IMR-90 (cell line): ENCODE measurements at regions of chr3 and their contacts with region 1.

Region 1: DNA sequence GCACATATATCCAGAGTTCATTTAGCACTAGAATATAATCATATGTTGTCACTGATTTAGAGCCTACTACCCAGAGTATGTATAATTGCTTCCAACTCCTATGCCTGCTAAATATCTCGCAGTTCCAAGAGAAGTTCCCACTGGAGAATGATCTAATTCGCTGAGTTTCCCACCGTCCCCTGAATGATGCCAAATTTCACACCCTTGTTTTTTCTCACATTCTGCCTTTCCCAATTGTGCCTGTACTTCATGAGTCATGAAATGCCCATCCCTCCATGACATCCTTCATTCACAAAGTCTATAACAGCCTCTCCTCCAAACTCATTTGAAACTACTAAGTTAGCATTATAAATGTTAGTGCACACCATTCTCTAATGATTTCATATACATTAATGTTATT is 177.2 kb downstream of the CBLB start:
- DNase-seq: no peak
- ATAC-seq: no peak
- H3K4me3 ChIP-seq: no peak overlapping the region
- H3K27ac ChIP-seq: no peak overlapping the region
- H3K4me1 ChIP-seq: no peaks in the 10 kb centered on the region
- H3K27me3 ChIP-seq: no peaks in the 10 kb centered on the region
- CTCF ChIP-seq: no peak
- POLR2A ChIP-seq: no peak
- RAD21 ChIP-seq: no peak

Region 2: DNA sequence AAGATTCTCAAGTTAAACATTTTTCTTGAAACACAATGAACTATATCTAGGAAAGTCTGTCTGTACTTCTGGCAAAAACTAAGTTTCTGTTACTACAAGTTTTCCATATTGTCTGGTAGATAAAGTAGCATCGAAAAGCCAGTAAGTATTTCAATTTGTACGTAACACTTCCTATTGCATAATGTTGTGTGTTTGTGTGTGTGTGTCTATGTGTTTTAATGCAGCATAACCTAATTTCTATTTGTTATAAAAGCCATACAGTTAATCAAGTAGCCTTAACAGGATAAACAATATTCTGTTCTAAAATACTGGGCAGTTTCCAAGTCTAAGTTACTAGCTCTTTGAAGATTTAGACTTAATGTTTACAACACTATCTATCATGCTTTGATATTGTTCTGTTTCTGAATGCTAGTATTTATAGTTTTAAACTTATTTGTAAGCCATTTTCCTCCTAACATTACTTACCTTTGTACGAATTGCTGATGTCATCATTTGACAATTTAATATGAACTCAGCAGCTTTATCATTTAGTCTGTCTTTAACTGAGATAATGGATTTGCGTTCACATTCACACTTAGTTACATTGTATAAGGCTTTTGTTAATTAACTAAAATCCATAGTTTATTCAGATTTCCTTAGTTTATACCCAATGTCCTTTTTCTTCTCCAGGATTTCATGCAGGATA is 13.2 kb after region 1 on chr3:
- CTCF ChIA-PET with region 1: no interaction called
- POLR2A ChIA-PET with region 1: no interaction called
- dilution Hi-C with region 1: no loop called
- in situ Hi-C with region 1: no loop called
- intact Hi-C with region 1: no loop called
- DNase-seq: no peak
- ATAC-seq: no peak
- H3K4me3 ChIP-seq: no peak overlapping the region
- H3K27ac ChIP-seq: no peak overlapping the region
- H3K4me1 ChIP-seq: no peaks in the 10 kb centered on the region
- H3K27me3 ChIP-seq: no peaks in the 10 kb centered on the region
- CTCF ChIP-seq: no peak
- POLR2A ChIP-seq: no peak
- RAD21 ChIP-seq: no peak

Region 3: DNA sequence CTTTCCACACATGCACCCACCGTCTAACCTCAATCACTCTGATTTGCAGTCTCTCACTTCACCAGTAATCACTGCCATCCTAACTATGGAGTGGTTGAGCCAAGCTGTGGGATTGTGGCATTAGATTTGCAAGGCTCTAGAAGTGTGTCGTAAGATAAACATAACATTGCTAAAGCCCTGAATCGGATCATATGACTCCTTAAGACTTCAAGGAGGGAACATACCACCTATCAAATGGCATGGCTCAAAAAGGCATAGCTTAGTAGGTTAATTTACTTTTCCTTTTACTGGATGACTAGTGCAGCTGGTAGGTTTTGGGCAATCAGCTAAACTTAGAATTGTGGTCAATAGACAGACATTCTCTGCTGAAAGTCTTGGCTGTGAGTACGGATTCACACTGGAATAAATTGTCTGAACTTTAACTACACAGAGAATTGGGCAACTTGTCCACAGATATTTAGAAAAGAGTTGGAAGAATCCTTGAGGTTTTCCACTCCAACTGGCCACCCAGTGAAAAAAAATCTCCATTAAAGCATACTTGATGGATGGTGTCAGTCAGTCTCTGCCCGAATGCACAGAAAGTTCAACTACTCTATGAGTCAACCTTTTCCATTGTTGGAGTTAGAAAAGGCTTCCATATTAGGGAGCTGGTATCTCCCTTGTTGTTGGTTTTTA is 653.9 kb after region 1 on chr3:
- CTCF ChIA-PET with region 1: no interaction called
- POLR2A ChIA-PET with region 1: no interaction called
- dilution Hi-C with region 1: no loop called
- in situ Hi-C with region 1: no loop called
- intact Hi-C with region 1: loop called (anchors 5 kb)
- DNase-seq: peak; percentile 93
- ATAC-seq: peak; percentile 95
- H3K4me3 ChIP-seq: no peak overlapping the region
- H3K27ac ChIP-seq: peak overlapping the region; percentile 5; the same call in 1 of the 2 replicates
- H3K4me1 ChIP-seq: peaks cover 2% of the 10 kb centered on the region; the same call in 1 of the 2 replicates
- H3K27me3 ChIP-seq: no peaks in the 10 kb centered on the region
- CTCF ChIP-seq: no peak; the same call in 1 of the 2 replicates
- POLR2A ChIP-seq: no peak
- RAD21 ChIP-seq: no peak

Region 4: GRCh38 chr3:107055181-107055942 is 1363.7 kb after region 1 on chr3:
- CTCF ChIA-PET with region 1: no interaction called
- POLR2A ChIA-PET with region 1: no interaction called
- dilution Hi-C with region 1: no loop called
- in situ Hi-C with region 1: loop called (anchors 10 kb)
- intact Hi-C with region 1: no loop called
- DNase-seq: no peak
- ATAC-seq: no peak
- H3K4me3 ChIP-seq: no peak overlapping the region
- H3K27ac ChIP-seq: no peak overlapping the region
- H3K4me1 ChIP-seq: no peaks in the 10 kb centered on the region
- H3K27me3 ChIP-seq: no peaks in the 10 kb centered on the region
- CTCF ChIP-seq: no peak
- POLR2A ChIP-seq: no peak
- RAD21 ChIP-seq: no peak